ENCODE measurements at regions of chr7 and their contacts with region 1.

Region 1: DNA sequence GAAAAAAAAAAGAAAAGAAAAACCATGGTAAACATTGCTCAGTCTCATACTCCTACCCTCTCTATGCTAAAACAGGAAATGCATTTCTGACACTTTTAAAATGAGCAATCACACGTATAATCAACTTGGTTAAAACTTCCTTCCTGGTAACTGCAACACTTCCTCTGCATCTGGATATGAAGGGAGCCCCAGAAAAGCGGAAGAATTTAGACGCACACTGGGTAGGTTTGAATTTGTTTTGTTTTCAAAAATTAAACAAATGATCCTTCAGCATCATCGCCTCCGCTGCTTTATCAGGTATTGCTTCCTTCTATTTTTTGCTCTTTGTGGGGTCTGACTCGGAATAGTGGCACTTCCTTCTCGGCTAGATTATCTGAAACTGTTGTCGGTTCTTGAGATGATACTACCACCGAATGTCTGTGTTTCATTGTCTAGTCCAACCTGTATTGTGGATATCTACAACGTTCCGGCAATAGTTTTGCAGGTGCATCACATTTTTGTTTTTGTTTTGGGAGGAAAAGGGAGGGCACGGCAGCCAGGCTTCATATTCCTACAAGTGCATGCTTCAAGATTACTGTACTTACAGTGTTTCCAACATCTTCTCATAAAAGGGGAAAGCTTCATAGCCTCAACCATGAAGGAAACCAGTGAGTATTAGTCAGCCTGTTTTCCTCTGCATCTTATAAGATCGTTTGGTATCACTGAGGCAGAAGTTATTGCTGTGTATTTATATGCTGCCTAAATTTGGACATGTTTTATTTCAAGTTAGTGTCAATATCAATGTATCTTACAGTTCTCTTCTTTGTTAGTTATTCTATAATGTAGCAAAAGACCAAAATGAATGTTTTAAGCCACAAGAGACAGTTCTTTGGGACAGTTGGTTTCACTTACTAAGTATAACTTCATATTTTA is at the start of gene PIK3CG:
- DNase-seq: no peak
- H3K4me3 Mint-ChIP-seq: peak within 1 kb of the TSS; percentile 83
- H3K27ac Mint-ChIP-seq: peak within 1 kb of the TSS; percentile 79
- H3K4me1 Mint-ChIP-seq: peaks cover 73% of the 10 kb centered on the region
- H3K27me3 Mint-ChIP-seq: no peaks in the 10 kb centered on the region
- total RNA-seq, gene PIK3CG: 10.9 to 11.3 TPM

Region 2: DNA sequence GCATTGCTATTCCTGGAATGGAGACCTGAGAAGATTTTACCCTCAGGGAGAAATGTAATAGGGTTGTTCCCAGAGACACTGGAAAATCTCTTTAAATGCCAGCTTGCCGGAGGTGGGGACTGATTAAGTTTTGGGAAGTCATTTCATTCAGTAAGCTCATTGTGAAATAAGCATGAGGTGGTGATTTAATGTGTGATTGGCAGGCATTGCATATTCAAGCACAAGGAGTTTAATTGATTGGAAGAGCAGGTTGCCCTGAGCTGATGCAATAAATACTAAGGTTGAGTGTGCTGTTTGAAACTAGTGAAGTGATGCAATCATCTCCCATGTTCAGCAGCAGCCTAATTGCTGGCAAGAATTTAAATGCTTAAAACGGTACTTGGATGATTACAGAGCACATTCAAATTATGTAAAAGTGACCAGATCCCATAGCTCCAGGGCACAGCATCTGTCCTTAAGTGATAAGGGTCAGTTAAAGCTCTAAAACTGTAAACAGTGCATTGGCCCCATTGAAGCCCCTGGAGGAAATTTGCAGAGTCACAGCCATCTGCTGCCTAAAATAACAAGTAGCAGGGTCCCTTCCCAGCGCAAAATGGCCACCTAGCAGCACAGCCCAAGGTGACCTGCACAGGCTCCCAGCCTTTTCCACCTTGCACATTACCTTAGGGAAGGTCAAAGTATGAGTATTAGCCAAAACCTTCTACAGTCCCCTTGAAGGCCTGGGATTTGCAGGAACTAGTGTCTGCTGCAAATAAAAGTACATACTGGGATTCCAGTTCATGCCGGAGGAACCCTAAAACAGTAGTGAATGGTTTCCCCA is 296.5 kb before region 1 on chr7:
- CTCF ChIA-PET with region 1: no interaction called
- POLR2A ChIA-PET with region 1: no interaction called
- intact Hi-C with region 1: loop called (anchors 10 kb)
- DNase-seq: no peak
- H3K4me3 Mint-ChIP-seq: no peak overlapping the region
- H3K27ac Mint-ChIP-seq: peak overlapping the region; percentile 79
- H3K4me1 Mint-ChIP-seq: peaks cover 14% of the 10 kb centered on the region
- H3K27me3 Mint-ChIP-seq: peaks cover 11% of the 10 kb centered on the region

Region 3: GRCh38 chr7:106717955-106718871 is 147.2 kb before region 1 on chr7:
- CTCF ChIA-PET with region 1: interaction called, 3 read pairs
- POLR2A ChIA-PET with region 1: no interaction called
- intact Hi-C with region 1: loop called (anchors 1 kb)
- DNase-seq: peak; percentile 90
- H3K4me3 Mint-ChIP-seq: no peak overlapping the region
- H3K27ac Mint-ChIP-seq: no peak overlapping the region
- H3K4me1 Mint-ChIP-seq: peaks cover 12% of the 10 kb centered on the region
- H3K27me3 Mint-ChIP-seq: no peaks in the 10 kb centered on the region

Region 4: GRCh38 chr7:106840342-106840741 is 25.0 kb before region 1 on chr7:
- CTCF ChIA-PET with region 1: no interaction called
- POLR2A ChIA-PET with region 1: no interaction called
- intact Hi-C with region 1: no loop called
- DNase-seq: no peak
- H3K4me3 Mint-ChIP-seq: no peak overlapping the region
- H3K27ac Mint-ChIP-seq: no peak overlapping the region
- H3K4me1 Mint-ChIP-seq: no peaks in the 10 kb centered on the region
- H3K27me3 Mint-ChIP-seq: peaks cover 4% of the 10 kb centered on the region

Region 5: GRCh38 chr7:107025449-107026103 is 160.2 kb after region 1 on chr7:
- CTCF ChIA-PET with region 1: no interaction called
- POLR2A ChIA-PET with region 1: no interaction called
- intact Hi-C with region 1: no loop called
- DNase-seq: no peak
- H3K4me3 Mint-ChIP-seq: no peak overlapping the region
- H3K27ac Mint-ChIP-seq: no peak overlapping the region
- H3K4me1 Mint-ChIP-seq: no peaks in the 10 kb centered on the region
- H3K27me3 Mint-ChIP-seq: peaks cover 3% of the 10 kb centered on the region

Region 6: GRCh38 chr7:107044347-107045194 is 179.2 kb after region 1 on chr7 and contains the start of gene PRKAR2B:
- CTCF ChIA-PET with region 1: no interaction called
- POLR2A ChIA-PET with region 1: no interaction called
- intact Hi-C with region 1: loop called (anchors 2 kb)
- DNase-seq: peak; percentile 73
- H3K4me3 Mint-ChIP-seq: peak within 1 kb of the TSS; percentile 72
- H3K27ac Mint-ChIP-seq: no peak within 1 kb of the TSS
- H3K4me1 Mint-ChIP-seq: peaks cover 18% of the 10 kb centered on the region
- H3K27me3 Mint-ChIP-seq: peaks cover 39% of the 10 kb centered on the region
- total RNA-seq, gene PRKAR2B: 1.3 to 1.4 TPM

Region 7: GRCh38 chr7:107816011-107816566 is 950.7 kb after region 1 on chr7:
- CTCF ChIA-PET with region 1: no interaction called
- POLR2A ChIA-PET with region 1: no interaction called
- intact Hi-C with region 1: loop called (anchors 10 kb)
- DNase-seq: no peak
- H3K4me3 Mint-ChIP-seq: no peak overlapping the region
- H3K27ac Mint-ChIP-seq: peak overlapping the region; percentile 64
- H3K4me1 Mint-ChIP-seq: peaks cover 31% of the 10 kb centered on the region
- H3K27me3 Mint-ChIP-seq: no peaks in the 10 kb centered on the region